ENCODE measurements at regions of chr11 and their contacts with region 1.

Region 1: GRCh38 chr11:119356349-119357031 is 10.0 kb upstream of the MFRP start:
- DNase-seq: peak; percentile 82
- ATAC-seq: peak; percentile 88
- H3K4me3 ChIP-seq: peak overlapping the region; percentile 32 to 94 (median 70)
- H3K4me3 Mint-ChIP-seq: peak overlapping the region; percentile 93
- H3K27ac ChIP-seq: no peak overlapping the region
- H3K27ac Mint-ChIP-seq: peak overlapping the region; percentile 35
- H3K4me1 ChIP-seq: peaks cover 3 to 17% of the 10 kb centered on the region in 2 donors
- H3K4me1 Mint-ChIP-seq: peaks cover 16% of the 10 kb centered on the region
- H3K27me3 ChIP-seq: peaks cover 0 to 39% (median 13%) of the 10 kb centered on the region in 4 experiments
- H3K27me3 Mint-ChIP-seq: peaks cover 42% of the 10 kb centered on the region
- CTCF ChIP-seq: peak; percentile 100

Region 2: DNA sequence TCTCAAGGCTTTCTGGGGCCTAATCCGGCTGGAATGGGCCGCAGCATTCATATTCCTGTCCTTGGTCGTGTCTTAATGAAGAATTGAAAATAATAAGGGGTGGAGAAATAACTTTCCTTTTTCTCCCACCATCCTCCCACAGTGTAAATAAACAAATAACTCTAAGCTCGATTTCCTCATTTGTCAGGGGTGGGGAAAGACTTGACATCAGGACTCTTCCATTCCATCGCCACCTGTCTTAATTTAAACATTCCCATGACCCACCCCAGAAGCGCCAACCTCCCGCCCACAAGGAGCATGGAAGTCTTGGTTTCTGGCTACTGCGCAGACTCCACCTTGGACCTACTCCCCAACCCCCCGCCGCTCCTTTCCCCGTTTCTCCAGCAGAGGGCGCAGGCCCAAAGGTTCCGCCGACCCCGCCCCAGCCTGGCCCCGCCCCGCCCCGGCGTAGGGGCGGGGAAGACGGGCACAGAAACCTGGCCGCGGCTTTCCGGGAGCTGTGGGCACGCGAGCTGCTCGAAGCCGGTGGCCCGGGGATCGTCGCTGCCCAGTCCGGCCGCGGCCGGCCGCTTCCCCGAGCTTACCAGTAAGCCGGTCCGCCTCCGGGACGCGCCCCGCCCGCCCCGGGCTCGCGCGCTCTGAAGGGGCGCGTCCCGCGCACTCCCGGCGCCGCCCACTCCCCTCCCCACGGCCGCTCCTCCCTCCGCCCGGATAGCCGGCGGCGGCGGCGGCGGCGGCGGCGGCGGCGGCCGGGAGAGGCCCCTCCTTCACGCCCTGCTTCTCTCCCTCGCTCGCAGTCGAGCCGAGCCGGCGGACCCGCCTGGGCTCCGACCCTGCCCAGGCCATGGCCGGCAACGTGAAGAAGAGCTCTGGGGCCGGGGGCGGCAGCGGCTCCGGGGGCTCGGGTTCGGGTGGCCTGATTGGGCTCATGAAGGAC is 150.6 kb before region 1 on chr11 and contains the start of gene CBL:
- CTCF ChIA-PET with region 1: no interaction called
- POLR2A ChIA-PET with region 1: no interaction called
- intact Hi-C with region 1: no loop called
- DNase-seq: peak; percentile 96
- ATAC-seq: peak; percentile 88
- H3K4me3 ChIP-seq: peak within 1 kb of the TSS; percentile 93 to 98 (median 96)
- H3K4me3 Mint-ChIP-seq: peak within 1 kb of the TSS; percentile 97
- H3K27ac ChIP-seq: peak within 1 kb of the TSS; percentile 60 to 84
- H3K27ac Mint-ChIP-seq: peak within 1 kb of the TSS; percentile 94
- H3K4me1 ChIP-seq: peaks cover 18 to 20% of the 10 kb centered on the region in 2 donors
- H3K4me1 Mint-ChIP-seq: peaks cover 33% of the 10 kb centered on the region
- H3K27me3 ChIP-seq: no peaks in the 10 kb centered on the region
- H3K27me3 Mint-ChIP-seq: no peaks in the 10 kb centered on the region
- CTCF ChIP-seq: peak; percentile 78
- total RNA-seq, gene CBL: 35.2 and 38.7 TPM in 2 replicates

Region 3: GRCh38 chr11:119334174-119334930 is 22.1 kb before region 1 on chr11 and contains the start of gene RNF26:
- CTCF ChIA-PET with region 1: interaction called, 16 read pairs
- POLR2A ChIA-PET with region 1: no interaction called
- intact Hi-C with region 1: loop called (anchors 2 kb)
- DNase-seq: peak; percentile 96
- ATAC-seq: peak; percentile 98
- H3K4me3 ChIP-seq: peak within 1 kb of the TSS; percentile 74 to 94 (median 88)
- H3K4me3 Mint-ChIP-seq: peak within 1 kb of the TSS; percentile 99
- H3K27ac ChIP-seq: peak within 1 kb of the TSS; percentile 59 to 83
- H3K27ac Mint-ChIP-seq: peak within 1 kb of the TSS; percentile 95
- H3K4me1 ChIP-seq: peaks cover 10 to 19% of the 10 kb centered on the region in 2 donors
- H3K4me1 Mint-ChIP-seq: peaks cover 27% of the 10 kb centered on the region
- H3K27me3 ChIP-seq: peaks cover 0 to 11% (median 7%) of the 10 kb centered on the region in 4 experiments
- H3K27me3 Mint-ChIP-seq: peaks cover 16% of the 10 kb centered on the region
- CTCF ChIP-seq: no peak
- total RNA-seq, gene RNF26: 21.3 and 21.8 TPM in 2 replicates

Region 4: DNA sequence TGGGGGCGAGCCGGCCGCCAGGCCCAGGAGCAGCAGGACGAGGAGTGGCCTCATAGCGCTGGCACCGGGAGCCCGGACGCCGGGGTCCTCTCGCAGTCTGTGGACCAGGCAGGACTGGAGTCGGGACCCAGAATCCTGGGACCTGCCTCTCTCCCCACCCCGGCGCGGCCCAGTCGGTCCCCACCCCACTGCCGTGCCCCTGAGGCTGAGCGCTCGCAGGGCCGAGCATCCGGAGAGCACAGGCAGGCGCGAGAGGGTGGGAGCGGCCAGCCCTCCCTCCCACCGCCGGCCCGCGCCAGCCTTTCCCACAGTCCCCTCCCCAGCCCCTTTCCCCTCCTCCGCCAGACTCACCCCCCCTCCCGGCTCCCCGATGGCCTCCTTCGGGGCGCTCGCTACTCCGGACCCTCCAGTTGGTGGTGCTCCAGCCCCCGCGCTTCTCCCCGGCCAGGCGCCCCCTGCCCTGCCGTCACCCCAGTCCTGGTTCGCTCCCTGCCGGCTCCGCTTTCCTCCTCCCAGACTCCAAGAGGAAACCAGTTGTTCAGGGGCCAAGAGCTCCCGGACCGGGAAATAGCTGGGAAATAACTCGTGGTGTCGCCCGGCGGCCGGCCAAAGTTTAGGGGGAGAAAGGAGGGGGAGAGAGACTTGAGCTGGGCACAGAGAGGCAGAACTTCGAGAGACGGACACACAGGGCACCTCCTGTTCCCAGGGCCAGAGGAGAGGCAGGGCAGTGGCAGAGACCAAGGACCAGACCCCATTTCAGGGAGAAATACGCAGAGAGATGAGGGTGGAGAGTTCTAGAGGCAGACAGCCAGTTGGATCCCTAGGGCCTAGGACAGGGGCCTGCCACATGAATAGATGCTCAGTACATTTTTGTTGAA is 15.9 kb before region 1 on chr11 and contains the start of gene C1QTNF5:
- CTCF ChIA-PET with region 1: interaction called, 16 read pairs
- POLR2A ChIA-PET with region 1: no interaction called
- intact Hi-C with region 1: loop called (anchors 2 kb)
- DNase-seq: peak; percentile 39
- ATAC-seq: no peak
- H3K4me3 ChIP-seq: peak within 1 kb of the TSS in 2 of 5 experiments; percentile 9 to 20
- H3K4me3 Mint-ChIP-seq: peak within 1 kb of the TSS; percentile 37
- H3K27ac ChIP-seq: no peak within 1 kb of the TSS
- H3K27ac Mint-ChIP-seq: no peak within 1 kb of the TSS
- H3K4me1 ChIP-seq: peaks cover 31% of the 10 kb centered on the region in 2 donors
- H3K4me1 Mint-ChIP-seq: peaks cover 26% of the 10 kb centered on the region
- H3K27me3 ChIP-seq: peaks cover 0 to 55% (median 30%) of the 10 kb centered on the region in 4 experiments
- H3K27me3 Mint-ChIP-seq: peaks cover 47% of the 10 kb centered on the region
- CTCF ChIP-seq: no peak
- total RNA-seq, gene C1QTNF5: not detected in 2 replicates

Region 5: DNA sequence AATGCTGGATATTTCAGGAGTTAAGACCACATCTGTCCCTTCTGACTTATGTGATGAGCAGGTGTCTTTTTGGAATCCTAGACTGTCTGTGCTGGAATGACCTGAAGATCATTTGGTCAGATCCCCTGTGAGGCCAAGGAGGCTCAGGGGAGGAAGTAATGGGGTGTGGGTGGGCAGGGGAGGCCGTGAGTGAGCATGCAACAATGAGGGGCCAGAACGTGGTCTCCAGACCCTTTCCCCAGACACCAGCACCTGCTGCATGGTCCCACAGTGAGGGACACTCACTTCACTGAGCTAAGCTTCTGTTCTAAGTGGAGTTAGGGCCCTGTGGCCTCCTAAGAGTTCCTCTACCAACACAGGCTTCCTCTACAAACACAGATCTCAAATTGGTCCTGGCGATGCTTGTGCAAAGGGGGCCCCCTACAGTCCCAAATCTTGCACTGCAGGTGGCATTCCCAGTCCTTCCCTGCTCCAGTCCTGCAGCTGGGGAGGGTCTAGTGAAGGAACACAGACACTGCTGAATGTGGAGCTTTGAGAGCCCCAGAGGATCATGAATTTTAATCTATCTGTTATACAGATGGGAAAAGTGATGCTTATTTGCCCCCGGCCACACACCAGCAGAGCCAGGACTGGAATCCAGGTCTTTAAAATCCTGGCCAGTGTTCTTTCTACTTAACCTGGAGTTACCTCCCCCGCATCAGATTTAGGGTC is 17.6 kb after region 1 on chr11:
- CTCF ChIA-PET with region 1: interaction called, 61 read pairs
- POLR2A ChIA-PET with region 1: no interaction called
- intact Hi-C with region 1: no loop called
- DNase-seq: peak; percentile 51
- ATAC-seq: peak; percentile 53
- H3K4me3 ChIP-seq: no peak overlapping the region
- H3K4me3 Mint-ChIP-seq: no peak overlapping the region
- H3K27ac ChIP-seq: no peak overlapping the region
- H3K27ac Mint-ChIP-seq: no peak overlapping the region
- H3K4me1 ChIP-seq: no peaks in the 10 kb centered on the region
- H3K4me1 Mint-ChIP-seq: no peaks in the 10 kb centered on the region
- H3K27me3 ChIP-seq: peaks cover 0 to 10% (median 0%) of the 10 kb centered on the region in 4 experiments
- H3K27me3 Mint-ChIP-seq: peaks cover 18% of the 10 kb centered on the region
- CTCF ChIP-seq: peak; percentile 68

Region 6: GRCh38 chr11:119381181-119381988 is 24.9 kb after region 1 on chr11 and contains the start of gene USP2:
- CTCF ChIA-PET with region 1: interaction called, 61 read pairs
- POLR2A ChIA-PET with region 1: no interaction called
- intact Hi-C with region 1: loop called (anchors 1 kb)
- DNase-seq: peak; percentile 97
- ATAC-seq: peak; percentile 99
- H3K4me3 ChIP-seq: peak within 1 kb of the TSS; percentile 51 to 72 (median 55)
- H3K4me3 Mint-ChIP-seq: no peak within 1 kb of the TSS
- H3K27ac ChIP-seq: peak within 1 kb of the TSS in 1 of 2 donors; percentile 64
- H3K27ac Mint-ChIP-seq: peak within 1 kb of the TSS; percentile 79
- H3K4me1 ChIP-seq: peaks cover 12 to 17% of the 10 kb centered on the region in 2 donors
- H3K4me1 Mint-ChIP-seq: peaks cover 6% of the 10 kb centered on the region
- H3K27me3 ChIP-seq: peaks cover 0 to 27% (median 16%) of the 10 kb centered on the region in 4 experiments
- H3K27me3 Mint-ChIP-seq: peaks cover 5% of the 10 kb centered on the region
- CTCF ChIP-seq: peak; percentile 90
- total RNA-seq, gene USP2: not detected in 2 replicates

Region 7: DNA sequence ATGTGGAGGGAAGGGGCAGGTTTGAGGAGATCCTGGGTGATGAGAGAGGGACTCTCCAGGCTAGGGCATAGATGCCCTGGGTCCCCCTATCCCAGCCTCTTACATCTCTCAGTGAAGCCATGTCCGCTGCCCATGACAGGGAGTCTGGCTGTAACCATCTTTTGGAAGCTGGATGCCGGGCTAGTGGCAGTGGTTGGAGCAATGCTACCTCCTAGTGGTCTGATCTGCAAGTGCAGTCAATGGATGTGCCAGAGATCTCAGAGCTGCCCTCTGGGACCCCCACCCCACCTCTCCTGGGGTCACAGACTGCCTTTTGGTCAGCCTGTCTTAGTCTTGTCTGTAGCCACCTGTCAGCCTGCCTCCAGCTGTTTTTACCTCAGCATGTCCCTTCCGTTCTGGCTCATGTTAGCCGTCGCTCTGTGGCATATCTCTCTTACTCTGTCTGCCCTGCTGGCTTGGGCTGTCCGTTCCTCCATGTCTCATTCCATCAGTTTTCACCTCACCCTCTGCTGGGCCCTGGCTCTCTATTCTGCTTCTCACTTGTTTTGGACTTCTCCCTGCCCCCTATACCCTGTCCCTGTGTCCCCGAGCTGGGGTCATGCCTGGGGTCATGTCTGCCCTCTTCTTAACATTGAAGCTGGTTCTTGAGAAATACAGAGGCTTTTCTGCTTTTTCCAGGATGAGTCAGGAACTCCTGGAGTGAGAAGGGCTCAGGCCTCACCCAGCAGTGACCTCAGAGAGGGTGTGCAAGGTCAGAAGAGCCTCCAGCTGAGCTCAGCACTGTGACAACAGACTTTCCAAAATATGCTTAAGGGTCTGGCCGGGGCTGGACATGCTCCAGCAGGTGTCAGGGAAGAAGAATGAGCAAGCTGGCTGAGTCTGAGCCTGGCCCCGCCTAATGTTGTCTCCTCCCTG is 118.4 kb after region 1 on chr11:
- CTCF ChIA-PET with region 1: interaction called, 40 read pairs
- POLR2A ChIA-PET with region 1: no interaction called
- intact Hi-C with region 1: no loop called
- DNase-seq: peak; percentile 59
- ATAC-seq: peak; percentile 67
- H3K4me3 ChIP-seq: no peak overlapping the region
- H3K4me3 Mint-ChIP-seq: no peak overlapping the region
- H3K27ac ChIP-seq: no peak overlapping the region
- H3K27ac Mint-ChIP-seq: no peak overlapping the region
- H3K4me1 ChIP-seq: no peaks in the 10 kb centered on the region
- H3K4me1 Mint-ChIP-seq: no peaks in the 10 kb centered on the region
- H3K27me3 ChIP-seq: peaks cover 0 to 11% (median 3%) of the 10 kb centered on the region in 4 experiments
- H3K27me3 Mint-ChIP-seq: peaks cover 45% of the 10 kb centered on the region
- CTCF ChIP-seq: peak; percentile 78